Activated CD4-positive, alpha-beta memory T cell treated with anti-CD3 and anti-CD28 coated beads for 36 hours (primary cell): ENCODE measurements at regions of chr11 and their contacts with region 1.

Region 1: GRCh38 chr11:38791302-38791961 is 2193.4 kb upstream of the RAG2 start:
- DNase-seq: no peak
- H3K4me3 Mint-ChIP-seq: no peak overlapping the region
- H3K27ac Mint-ChIP-seq: no peak overlapping the region
- H3K4me1 Mint-ChIP-seq: no peaks in the 10 kb centered on the region
- H3K27me3 Mint-ChIP-seq: no peaks in the 10 kb centered on the region

Region 2: DNA sequence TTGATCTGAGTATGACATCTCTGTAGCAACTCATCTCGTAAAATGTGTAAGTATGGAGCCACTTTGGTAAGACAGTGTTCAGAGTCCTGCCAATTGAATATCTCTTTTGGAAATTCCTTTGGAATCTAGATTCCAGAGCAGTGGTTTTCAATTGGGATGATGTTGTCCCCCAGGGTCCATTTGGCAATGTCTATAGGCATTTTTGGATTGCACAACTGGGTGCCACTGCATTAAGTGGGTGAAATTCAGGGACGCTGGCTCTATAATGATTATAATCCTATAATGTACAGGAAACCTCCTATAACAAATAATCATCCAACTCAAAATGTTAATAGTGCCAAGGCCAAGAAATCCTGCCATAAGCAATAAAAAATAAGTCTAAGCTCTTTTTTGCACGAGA is 1788.6 kb before region 1 on chr11:
- CTCF ChIA-PET with region 1: no interaction called
- POLR2A ChIA-PET with region 1: no interaction called
- intact Hi-C with region 1: loop called (anchors 5 kb)
- DNase-seq: no peak
- H3K4me3 Mint-ChIP-seq: no peak overlapping the region
- H3K27ac Mint-ChIP-seq: no peak overlapping the region
- H3K4me1 Mint-ChIP-seq: no peaks in the 10 kb centered on the region
- H3K27me3 Mint-ChIP-seq: no peaks in the 10 kb centered on the region

Region 3: GRCh38 chr11:37946155-37946766 is 845.2 kb before region 1 on chr11:
- CTCF ChIA-PET with region 1: interaction called, 3 read pairs
- POLR2A ChIA-PET with region 1: no interaction called
- intact Hi-C with region 1: loop called (anchors 5 kb)
- DNase-seq: no peak
- H3K4me3 Mint-ChIP-seq: no peak overlapping the region
- H3K27ac Mint-ChIP-seq: no peak overlapping the region
- H3K4me1 Mint-ChIP-seq: no peaks in the 10 kb centered on the region
- H3K27me3 Mint-ChIP-seq: no peaks in the 10 kb centered on the region

Region 4: GRCh38 chr11:40293655-40294348 is 1502.4 kb after region 1 on chr11:
- CTCF ChIA-PET with region 1: no interaction called
- POLR2A ChIA-PET with region 1: no interaction called
- intact Hi-C with region 1: loop called (anchors 10 kb)
- DNase-seq: peak; percentile 46
- H3K4me3 Mint-ChIP-seq: peak overlapping the region; percentile 21
- H3K27ac Mint-ChIP-seq: no peak overlapping the region
- H3K4me1 Mint-ChIP-seq: peaks cover 8% of the 10 kb centered on the region
- H3K27me3 Mint-ChIP-seq: peaks cover 13% of the 10 kb centered on the region